Activated CD8-positive, alpha-beta T cell treated with anti-CD3 and anti-CD28 coated beads for 36 hours (primary cell): ENCODE measurements at regions of chr5 and their contacts with region 1.

Region 1: DNA sequence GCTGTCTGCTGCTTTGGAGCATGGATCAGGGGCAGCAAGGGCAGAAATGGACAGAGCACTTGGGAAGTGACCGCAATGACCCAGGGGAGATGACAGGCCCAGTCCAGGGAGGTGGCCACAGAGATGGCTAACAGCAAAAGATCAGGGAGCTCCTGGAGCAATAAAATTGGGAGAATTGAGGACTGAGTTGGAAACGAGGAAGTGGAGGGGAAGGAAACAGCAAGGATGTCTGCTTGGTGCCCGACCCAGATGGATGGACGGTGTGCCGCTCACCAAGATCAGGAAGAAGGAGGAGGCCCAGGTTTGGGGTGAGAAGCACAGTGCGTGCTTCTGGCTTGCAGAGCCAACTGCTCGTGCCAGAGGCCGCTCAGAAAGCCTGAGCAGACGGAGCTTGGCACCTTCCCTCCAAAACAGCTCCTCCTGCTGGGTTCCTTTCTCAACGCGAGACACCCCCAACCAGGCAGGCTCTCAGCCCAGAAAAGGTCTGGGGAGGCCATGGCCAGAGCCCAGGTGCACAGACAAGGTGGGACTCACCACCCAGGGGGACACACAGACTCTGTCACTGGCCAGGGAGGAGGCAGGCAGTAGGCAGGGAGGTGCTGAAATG is 1.7 kb upstream of the SLC34A1 start:
- DNase-seq: peak; percentile 39
- ATAC-seq: no peak
- H3K4me3 Mint-ChIP-seq: no peak overlapping the region
- H3K27ac Mint-ChIP-seq: no peak overlapping the region
- H3K4me1 Mint-ChIP-seq: peaks cover 23% of the 10 kb centered on the region
- H3K27me3 Mint-ChIP-seq: no peaks in the 10 kb centered on the region
- CTCF ChIP-seq: peak; percentile 13

Region 2: DNA sequence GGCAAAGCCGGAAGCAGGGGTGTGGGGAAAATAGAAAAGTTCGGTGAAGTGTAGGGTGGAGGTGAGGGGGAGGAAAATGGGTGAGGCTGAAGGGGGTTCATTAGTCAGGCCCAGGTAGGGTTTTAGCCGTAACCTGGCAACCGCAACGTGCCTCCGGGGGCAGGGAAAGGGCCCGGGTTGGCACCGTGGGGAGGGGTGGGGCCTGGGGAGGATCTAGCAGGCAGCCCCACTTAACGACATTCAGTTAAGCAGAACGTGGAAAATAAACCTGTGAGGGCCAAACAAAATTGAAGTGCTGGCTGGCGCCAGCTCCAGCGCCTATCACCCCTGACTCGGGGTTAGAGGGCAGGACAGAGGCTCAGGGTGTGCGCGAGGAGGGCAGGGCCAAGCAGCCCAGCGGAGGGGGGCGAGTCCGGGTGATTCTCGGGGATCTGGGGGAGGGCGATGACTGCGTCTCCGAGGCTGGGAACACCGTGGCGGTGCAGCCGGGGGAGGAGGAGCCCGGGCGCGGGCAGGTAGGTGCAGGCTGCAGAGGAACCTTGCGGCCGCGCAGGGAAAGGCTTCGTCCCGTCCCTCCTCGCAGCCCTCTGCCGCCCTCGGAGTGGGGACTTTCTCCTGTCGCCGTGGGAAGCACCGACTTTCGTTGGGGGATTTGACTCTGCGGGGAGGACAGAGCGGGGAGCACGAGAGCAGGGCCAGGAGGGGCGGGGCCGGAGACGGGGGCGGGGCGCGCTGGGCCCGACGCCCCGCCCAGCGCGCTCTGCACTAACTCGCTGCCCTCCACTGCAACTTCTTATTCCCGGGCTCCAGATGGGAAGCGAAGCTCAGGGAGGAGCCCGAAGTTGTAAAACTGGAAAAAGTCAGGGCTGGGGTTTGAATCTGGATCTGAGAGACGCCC is 19.7 kb before region 1 on chr5:
- CTCF ChIA-PET with region 1: interaction called, 10 read pairs
- POLR2A ChIA-PET with region 1: interaction called, 5 read pairs
- intact Hi-C with region 1: no loop called
- DNase-seq: peak; percentile 80
- ATAC-seq: peak; percentile 72
- H3K4me3 Mint-ChIP-seq: peak overlapping the region; percentile 73
- H3K27ac Mint-ChIP-seq: peak overlapping the region; percentile 77
- H3K4me1 Mint-ChIP-seq: peaks cover 71% of the 10 kb centered on the region
- H3K27me3 Mint-ChIP-seq: no peaks in the 10 kb centered on the region
- CTCF ChIP-seq: no peak

Region 3: DNA sequence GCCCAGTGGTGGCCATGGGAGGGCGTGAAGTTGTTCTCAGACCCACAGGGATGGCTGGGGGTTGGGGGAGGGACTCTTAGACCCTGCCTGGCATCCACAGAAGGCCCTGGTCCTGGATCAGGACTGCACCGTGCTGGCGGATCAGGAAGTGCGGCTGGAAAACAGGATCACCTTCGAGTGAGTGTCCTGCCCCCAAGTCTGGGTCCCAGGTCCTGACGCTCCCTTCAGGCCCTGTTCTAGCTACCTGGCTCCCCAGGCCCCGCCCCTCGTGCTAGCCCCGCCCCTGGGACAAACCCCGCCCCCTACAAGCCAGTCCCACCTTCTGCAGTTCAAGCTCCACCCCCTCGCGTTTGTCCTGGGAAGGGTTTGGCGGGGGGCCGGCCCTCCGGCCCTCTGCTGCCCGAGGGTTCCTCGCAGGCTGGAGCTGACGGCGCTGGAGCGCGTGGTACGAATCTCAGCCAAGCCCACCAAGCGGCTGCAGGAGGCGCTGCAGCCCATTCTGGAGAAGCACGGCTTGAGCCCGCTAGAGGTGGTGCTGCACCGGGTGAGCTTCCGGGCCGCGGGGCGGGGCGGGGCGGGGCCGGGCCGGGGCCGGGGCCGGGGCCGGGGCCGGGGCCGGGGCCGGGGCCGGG is 11.9 kb before region 1 on chr5:
- CTCF ChIA-PET with region 1: interaction called, 25 read pairs
- POLR2A ChIA-PET with region 1: interaction called, 5 read pairs
- intact Hi-C with region 1: no loop called
- DNase-seq: peak; percentile 63
- ATAC-seq: peak; percentile 65
- H3K4me3 Mint-ChIP-seq: no peak overlapping the region
- H3K27ac Mint-ChIP-seq: no peak overlapping the region
- H3K4me1 Mint-ChIP-seq: peaks cover 58% of the 10 kb centered on the region
- H3K27me3 Mint-ChIP-seq: no peaks in the 10 kb centered on the region
- CTCF ChIP-seq: no peak